A549 (cell line): ENCODE measurements at regions of chr2 and their contacts with region 1.

Region 1: GRCh38 chr2:117997872-117998454 is 15.9 kb downstream of the CCDC93 start:
- DNase-seq: no peak
- ATAC-seq: no peak
- H3K4me3 ChIP-seq: no peak overlapping the region
- H3K27ac ChIP-seq: no peak overlapping the region
- H3K4me1 ChIP-seq: no peaks in the 10 kb centered on the region
- CTCF ChIP-seq: no peak
- EP300 ChIP-seq: no peak
- POLR2A ChIP-seq: no peak
- RAD21 ChIP-seq: no peak

Region 2: GRCh38 chr2:117835990-117836760 is 161.8 kb before region 1 on chr2:
- CTCF ChIA-PET with region 1: interaction called, 92 read pairs
- POLR2A ChIA-PET with region 1: no interaction called
- DNase-seq: peak; percentile 34 to 42
- ATAC-seq: peak; percentile 79 to 89
- H3K4me3 ChIP-seq: no peak overlapping the region
- H3K27ac ChIP-seq: no peak overlapping the region
- H3K4me1 ChIP-seq: no peaks in the 10 kb centered on the region
- CTCF ChIP-seq: peak; percentile 58
- EP300 ChIP-seq: no peak
- POLR2A ChIP-seq: no peak
- RAD21 ChIP-seq: peak; percentile 59 to 64; a peak in 4 of 5 replicates